ENCODE measurements at regions of chr10 and their contacts with region 1.

Region 1: GRCh38 chr10:109914966-109915365 is 8.3 kb downstream of the XPNPEP1 start:
- DNase-seq: peak in 1 of 2 donors; percentile 80
- ATAC-seq: peak; percentile 83 to 89 (median 89)
- H3K4me3 ChIP-seq: no peak overlapping the region
- H3K4me3 Mint-ChIP-seq: peak overlapping the region; percentile 81
- H3K27ac ChIP-seq: peak overlapping the region; percentile 72
- H3K27ac Mint-ChIP-seq: peak overlapping the region; percentile 82 to 92
- H3K4me1 ChIP-seq: peaks cover 37% of the 10 kb centered on the region
- H3K4me1 Mint-ChIP-seq: peaks cover 84 to 85% of the 10 kb centered on the region in 2 donors
- H3K27me3 ChIP-seq: no peaks in the 10 kb centered on the region
- H3K27me3 Mint-ChIP-seq: no peaks in the 10 kb centered on the region
- CTCF ChIP-seq: no peak

Region 2: DNA sequence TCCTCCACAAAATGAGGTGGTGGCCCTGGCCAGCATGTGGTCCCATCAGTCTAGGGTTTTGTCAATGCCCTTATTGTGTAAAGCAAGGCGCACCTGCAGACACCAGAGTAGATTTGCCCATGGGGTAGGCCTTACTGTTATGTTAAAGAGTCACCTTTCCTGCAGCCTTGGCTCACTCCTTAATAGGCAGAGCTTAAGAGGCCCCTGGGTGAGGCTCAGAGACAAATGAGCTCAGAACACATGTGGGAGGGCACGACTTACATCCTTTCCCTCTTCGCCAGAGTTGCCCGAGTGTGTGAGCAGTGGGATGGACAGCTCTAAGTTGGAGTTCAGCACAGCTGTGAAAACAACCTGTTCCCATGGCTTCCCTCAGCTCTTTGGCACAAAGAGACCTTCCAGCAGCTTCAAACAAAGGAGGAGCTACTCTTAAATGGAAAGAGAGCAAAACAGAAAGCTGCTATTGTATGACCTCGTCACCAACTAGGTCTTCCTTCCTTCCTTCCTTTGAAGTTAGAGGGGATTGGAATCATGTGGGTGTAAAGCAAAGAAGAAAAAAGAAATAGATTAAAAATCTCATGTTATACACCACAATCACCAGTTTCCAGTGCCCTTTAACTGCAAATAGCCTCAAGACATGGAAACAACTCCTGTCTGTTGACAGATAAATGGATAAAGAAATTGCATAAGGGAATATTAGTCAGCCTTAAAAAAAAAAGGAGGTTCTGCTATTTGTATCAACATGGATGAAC is 20.2 kb after region 1 on chr10:
- intact Hi-C with region 1: loop called (anchors 2 kb)
- DNase-seq: peak in 1 of 2 donors; percentile 48
- ATAC-seq: no peak
- H3K4me3 ChIP-seq: no peak overlapping the region
- H3K4me3 Mint-ChIP-seq: peak overlapping the region; percentile 42
- H3K27ac ChIP-seq: peak overlapping the region; percentile 22
- H3K27ac Mint-ChIP-seq: peak overlapping the region; percentile 75 to 80
- H3K4me1 ChIP-seq: peaks cover 27% of the 10 kb centered on the region
- H3K4me1 Mint-ChIP-seq: peaks cover 24 to 27% of the 10 kb centered on the region in 2 donors
- H3K27me3 ChIP-seq: no peaks in the 10 kb centered on the region
- H3K27me3 Mint-ChIP-seq: no peaks in the 10 kb centered on the region
- CTCF ChIP-seq: no peak

Region 3: DNA sequence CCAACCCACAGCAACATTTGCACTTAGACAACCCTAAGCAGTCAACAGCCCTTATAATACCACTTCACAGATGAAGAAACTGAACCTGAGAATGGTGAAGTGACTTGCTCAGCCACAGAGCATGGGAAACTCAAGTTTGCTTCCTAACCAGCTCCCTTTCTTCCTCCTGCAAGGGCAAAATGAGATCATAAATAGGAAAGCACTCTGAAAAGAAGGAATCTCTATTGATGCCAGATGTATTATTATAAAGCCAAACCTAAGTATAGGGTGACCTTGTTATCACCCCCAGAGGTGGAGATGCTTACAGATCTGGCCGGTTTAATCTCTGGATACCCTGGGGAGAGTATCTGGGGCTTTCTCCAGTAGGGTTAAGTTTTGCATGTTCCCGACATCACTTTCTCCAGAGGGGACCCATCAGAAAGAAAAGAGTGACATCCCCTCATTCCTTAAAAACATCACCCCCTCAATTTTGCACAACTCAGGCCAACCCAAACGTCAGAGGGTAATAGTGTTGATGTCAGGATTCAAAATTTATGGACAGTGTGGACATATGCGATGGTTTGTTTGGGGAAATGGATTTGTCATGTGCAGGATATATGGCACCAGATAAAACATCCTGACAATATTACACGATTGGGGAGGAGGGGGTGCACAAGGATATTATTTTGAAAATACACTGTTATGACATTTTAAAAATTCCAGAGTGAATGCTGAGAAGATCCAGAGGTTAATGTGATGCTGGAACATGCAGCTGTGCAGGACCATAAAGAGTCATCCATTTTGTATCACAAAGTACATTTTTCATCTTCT is 32.4 kb after region 1 on chr10:
- intact Hi-C with region 1: loop called (anchors 5 kb)
- DNase-seq: no peak
- ATAC-seq: no peak
- H3K4me3 ChIP-seq: no peak overlapping the region
- H3K4me3 Mint-ChIP-seq: no peak overlapping the region
- H3K27ac ChIP-seq: no peak overlapping the region
- H3K27ac Mint-ChIP-seq: no peak overlapping the region
- H3K4me1 ChIP-seq: peaks cover 10% of the 10 kb centered on the region
- H3K4me1 Mint-ChIP-seq: peaks cover 29 to 32% of the 10 kb centered on the region in 2 donors
- H3K27me3 ChIP-seq: no peaks in the 10 kb centered on the region
- H3K27me3 Mint-ChIP-seq: no peaks in the 10 kb centered on the region
- CTCF ChIP-seq: no peak

Measured in natural killer cell (primary cell).